ENCODE measurements at regions of chr10 and their contacts with region 1.

Region 1: GRCh38 chr10:13765641-13766341 is 179.0 kb downstream of the PRPF18 start:
- DNase-seq: no peak
- H3K4me3 ChIP-seq: no peak overlapping the region
- H3K27ac ChIP-seq: no peak overlapping the region
- H3K4me1 ChIP-seq: no peaks in the 10 kb centered on the region
- H3K27me3 ChIP-seq: no peaks in the 10 kb centered on the region
- CTCF ChIP-seq: no peak
- EP300 ChIP-seq: no peak
- POLR2A ChIP-seq: no peak
- RAD21 ChIP-seq: no peak

Region 2: GRCh38 chr10:13776861-13777311 is 11.1 kb after region 1 on chr10:
- CTCF ChIA-PET with region 1: interaction called, 14 read pairs
- POLR2A ChIA-PET with region 1: no interaction called
- DNase-seq: no peak
- H3K4me3 ChIP-seq: no peak overlapping the region
- H3K27ac ChIP-seq: no peak overlapping the region
- H3K4me1 ChIP-seq: no peaks in the 10 kb centered on the region
- H3K27me3 ChIP-seq: no peaks in the 10 kb centered on the region
- CTCF ChIP-seq: no peak
- EP300 ChIP-seq: no peak
- POLR2A ChIP-seq: no peak
- RAD21 ChIP-seq: no peak

Measured in H1 (cell line).